WTC11 (cell line): ENCODE measurements at regions of chr7 and their contacts with region 1.

Region 1: GRCh38 chr7:33459340-33459751 is 330.0 kb downstream of the BBS9 start:
- DNase-seq: peak; percentile 26
- ATAC-seq: peak; percentile 100
- H3K4me3 Mint-ChIP-seq: no peak overlapping the region
- H3K27ac Mint-ChIP-seq: no peak overlapping the region
- H3K4me1 Mint-ChIP-seq: peaks cover 4% of the 10 kb centered on the region; the same call in 1 of the 2 replicates
- H3K27me3 Mint-ChIP-seq: no peaks in the 10 kb centered on the region
- CTCF ChIP-seq: peak; percentile 18; the same call in 1 of the 2 replicates

Region 2: DNA sequence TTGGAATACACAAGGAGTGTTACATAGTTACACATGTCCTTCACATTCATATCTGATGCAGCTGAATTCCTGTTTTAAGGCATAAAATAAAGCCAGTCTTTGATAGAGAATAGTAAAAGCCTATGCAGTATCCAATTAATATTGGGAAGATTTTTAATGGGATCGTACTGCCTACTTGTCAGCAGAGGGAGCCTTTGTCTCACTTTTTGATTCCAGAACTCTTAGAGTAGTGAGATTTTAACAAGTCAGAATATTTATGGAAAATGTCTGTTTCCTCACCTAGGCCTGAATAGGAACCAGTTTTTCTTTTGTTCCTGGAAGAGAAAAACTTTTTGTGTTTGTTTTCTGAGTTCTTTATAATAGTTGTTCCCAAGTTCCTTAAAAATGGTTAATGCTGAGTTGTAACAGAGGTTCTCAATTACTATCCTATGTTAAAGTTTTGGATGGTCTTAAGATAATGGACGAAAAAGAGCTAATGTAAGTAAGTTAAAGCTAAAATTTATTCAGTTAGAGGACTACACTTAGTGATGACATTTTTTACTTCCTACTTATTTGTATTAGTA is 215.9 kb before region 1 on chr7:
- CTCF ChIA-PET with region 1: interaction called, 12 read pairs
- POLR2A ChIA-PET with region 1: no interaction called
- DNase-seq: no peak
- ATAC-seq: peak; percentile 69
- H3K4me3 Mint-ChIP-seq: no peak overlapping the region
- H3K27ac Mint-ChIP-seq: no peak overlapping the region
- H3K4me1 Mint-ChIP-seq: peaks cover 4% of the 10 kb centered on the region
- H3K27me3 Mint-ChIP-seq: no peaks in the 10 kb centered on the region
- CTCF ChIP-seq: peak; percentile 34; the same call in 1 of the 2 replicates

Region 3: DNA sequence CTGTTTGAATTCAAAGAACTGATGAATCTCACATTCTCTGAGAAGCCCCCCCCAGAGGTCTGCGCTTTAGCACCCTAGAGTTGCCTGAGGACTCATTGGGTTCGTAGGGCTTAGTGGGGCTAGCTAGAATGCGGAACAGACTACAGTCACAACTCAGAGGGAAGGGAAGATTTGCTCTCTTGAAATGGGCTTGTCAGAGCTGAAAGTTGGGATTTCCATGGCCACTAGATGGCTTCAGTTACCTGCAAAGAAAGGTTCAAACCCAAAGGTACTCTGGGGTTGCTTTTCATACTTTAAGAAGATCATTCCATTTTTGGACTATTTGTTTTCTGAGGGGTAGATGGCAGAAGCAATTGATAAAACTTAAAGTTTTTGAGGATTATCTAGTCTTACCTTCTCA is 125.0 kb before region 1 on chr7:
- CTCF ChIA-PET with region 1: interaction called, 14 read pairs
- POLR2A ChIA-PET with region 1: no interaction called
- DNase-seq: no peak
- ATAC-seq: peak; percentile 97
- H3K4me3 Mint-ChIP-seq: no peak overlapping the region
- H3K27ac Mint-ChIP-seq: no peak overlapping the region
- H3K4me1 Mint-ChIP-seq: no peaks in the 10 kb centered on the region
- H3K27me3 Mint-ChIP-seq: no peaks in the 10 kb centered on the region
- CTCF ChIP-seq: no peak

Region 4: GRCh38 chr7:33411020-33411419 is 48.3 kb before region 1 on chr7:
- CTCF ChIA-PET with region 1: no interaction called
- POLR2A ChIA-PET with region 1: no interaction called
- DNase-seq: no peak
- ATAC-seq: no peak
- H3K4me3 Mint-ChIP-seq: no peak overlapping the region
- H3K27ac Mint-ChIP-seq: no peak overlapping the region
- H3K4me1 Mint-ChIP-seq: no peaks in the 10 kb centered on the region
- H3K27me3 Mint-ChIP-seq: no peaks in the 10 kb centered on the region; the same call in 1 of the 2 replicates
- CTCF ChIP-seq: no peak

Region 5: GRCh38 chr7:33550979-33551378 is 91.6 kb after region 1 on chr7:
- CTCF ChIA-PET with region 1: no interaction called
- POLR2A ChIA-PET with region 1: no interaction called
- DNase-seq: no peak
- ATAC-seq: no peak
- H3K4me3 Mint-ChIP-seq: no peak overlapping the region
- H3K27ac Mint-ChIP-seq: no peak overlapping the region
- H3K4me1 Mint-ChIP-seq: no peaks in the 10 kb centered on the region
- H3K27me3 Mint-ChIP-seq: no peaks in the 10 kb centered on the region
- CTCF ChIP-seq: no peak